AG04450 (cell line): ENCODE measurements at regions of chr22 and their contacts with region 1.

Region 1: DNA sequence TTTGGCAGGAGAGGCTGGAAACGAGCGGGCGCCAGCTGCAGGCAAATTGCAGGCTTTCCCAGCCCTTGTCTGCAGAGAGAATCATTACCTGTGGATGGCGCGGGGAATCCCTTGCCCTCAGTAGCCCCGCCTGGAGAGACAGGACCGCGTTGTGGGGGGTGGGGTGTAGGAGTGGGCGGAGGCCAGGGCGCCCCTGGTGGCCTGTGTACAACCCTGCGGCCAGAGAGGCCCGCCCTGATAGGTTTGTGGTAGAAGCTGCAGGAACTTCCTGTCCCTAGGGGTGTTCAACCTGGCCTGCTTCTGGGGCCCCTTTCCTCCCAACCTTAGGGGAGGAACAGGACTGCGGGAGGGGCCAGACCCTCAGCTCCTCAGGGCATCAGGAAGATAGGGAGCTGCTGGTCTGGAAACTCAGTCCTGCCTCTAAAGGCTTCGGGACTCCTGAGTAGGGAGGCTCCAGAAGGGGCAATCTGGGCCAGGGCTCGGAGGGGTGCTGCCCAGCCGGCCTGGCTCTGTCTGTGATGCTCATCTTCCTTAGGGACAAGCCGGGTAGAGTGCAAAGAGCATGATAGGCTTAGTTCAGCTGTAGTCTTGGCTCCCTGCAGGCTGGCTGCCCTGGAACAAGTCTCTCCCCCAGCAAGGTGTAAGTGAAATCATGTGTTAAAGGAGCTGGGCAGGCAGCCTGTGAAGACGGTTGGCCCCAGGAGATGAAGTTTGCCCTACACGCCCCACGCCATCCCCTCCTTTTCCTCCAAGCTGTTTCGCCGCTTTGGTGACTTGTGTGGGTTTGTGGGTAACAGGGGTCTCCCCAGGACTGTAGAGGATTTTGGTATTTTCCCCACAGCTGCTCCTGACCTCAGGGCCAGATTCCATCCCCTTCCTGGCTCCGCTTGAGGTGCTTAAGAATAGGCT is 24.1 kb upstream of the SUSD2 start:
- DNase-seq: no peak
- H3K4me3 ChIP-seq: peak overlapping the region; percentile 95
- H3K27ac ChIP-seq: peak overlapping the region; percentile 47
- H3K27me3 ChIP-seq: no peaks in the 10 kb centered on the region
- CTCF ChIP-seq: peak; percentile 93

Region 2: DNA sequence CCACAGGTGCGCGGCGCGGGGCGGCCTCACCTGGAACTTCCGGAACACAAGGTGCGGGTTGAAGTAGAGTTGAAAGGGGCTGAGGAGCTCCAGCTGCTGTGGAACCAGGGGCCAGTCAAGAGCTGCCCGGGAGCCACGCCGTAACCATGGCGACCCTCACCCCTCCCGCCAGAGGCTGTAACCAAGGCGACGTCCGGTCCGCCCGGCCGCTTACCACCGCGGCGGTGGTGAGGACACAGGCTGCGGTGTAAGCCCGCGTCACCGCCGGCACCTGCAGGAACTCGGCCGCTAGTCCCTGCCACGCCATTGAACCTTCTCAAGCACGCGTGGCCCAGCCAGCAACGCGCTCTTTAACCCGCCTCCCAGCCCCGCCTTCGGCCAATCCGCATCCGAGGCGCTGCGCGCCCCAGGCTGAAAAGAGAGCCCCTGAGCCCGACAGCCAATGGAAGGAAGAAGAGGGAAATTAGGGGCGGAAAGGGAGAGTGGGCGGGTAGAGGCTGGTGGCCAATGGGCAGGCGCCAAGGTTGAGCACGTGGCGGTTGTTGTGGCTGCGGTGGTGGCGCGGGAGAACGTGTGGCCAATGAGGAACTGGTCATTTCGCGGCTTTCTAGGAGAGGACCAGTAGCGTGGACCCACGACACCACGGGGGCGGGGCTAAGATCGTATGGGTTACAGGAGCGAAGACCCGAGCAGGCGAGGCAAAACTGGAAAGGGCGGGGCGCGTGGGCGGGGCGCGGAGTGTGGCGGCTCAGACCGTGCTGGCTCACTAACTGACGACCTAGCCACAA is 318.3 kb before region 1 on chr22 and contains the start of gene DERL3:
- CTCF ChIA-PET with region 1: no interaction called
- POLR2A ChIA-PET with region 1: no interaction called
- DNase-seq: peak; percentile 88
- H3K4me3 ChIP-seq: peak within 1 kb of the TSS; percentile 52
- H3K27ac ChIP-seq: no peak within 1 kb of the TSS
- H3K27me3 ChIP-seq: peaks cover 18% of the 10 kb centered on the region
- CTCF ChIP-seq: no peak
- polyA plus RNA-seq, gene DERL3: 0.19 and 0.27 TPM in 2 replicates

Region 3: DNA sequence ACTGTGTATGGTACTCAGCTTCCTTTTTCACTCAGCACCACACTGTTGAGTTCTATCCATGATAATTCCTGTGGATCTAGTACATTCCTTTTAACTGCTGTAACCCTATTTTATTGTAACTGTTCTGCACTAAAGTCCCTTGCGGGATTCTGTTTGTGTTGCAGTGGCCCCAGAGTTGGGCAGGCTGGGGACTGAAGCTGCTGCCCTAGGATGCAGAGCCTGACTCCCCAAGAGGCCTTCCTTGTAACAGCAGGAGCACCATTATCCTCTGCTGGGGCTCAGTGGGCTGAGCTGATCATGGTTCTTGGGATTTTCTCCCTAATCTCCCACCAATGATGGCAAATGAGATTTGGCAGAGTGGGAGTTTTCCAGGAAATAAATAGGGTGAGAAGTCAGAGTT is 68.4 kb before region 1 on chr22:
- CTCF ChIA-PET with region 1: interaction called, 15 read pairs
- POLR2A ChIA-PET with region 1: interaction called, 3 read pairs
- DNase-seq: no peak
- H3K4me3 ChIP-seq: no peak overlapping the region
- H3K27ac ChIP-seq: no peak overlapping the region
- H3K27me3 ChIP-seq: no peaks in the 10 kb centered on the region
- CTCF ChIP-seq: 0 out of 2 replicates have a peak, but pooled peaks have one; percentile 5

Region 4: GRCh38 chr22:24134090-24134846 is 22.9 kb before region 1 on chr22:
- CTCF ChIA-PET with region 1: interaction called, 12 read pairs
- POLR2A ChIA-PET with region 1: no interaction called
- DNase-seq: no peak
- H3K4me3 ChIP-seq: no peak overlapping the region
- H3K27ac ChIP-seq: no peak overlapping the region
- H3K27me3 ChIP-seq: no peaks in the 10 kb centered on the region
- CTCF ChIP-seq: no peak

Region 5: DNA sequence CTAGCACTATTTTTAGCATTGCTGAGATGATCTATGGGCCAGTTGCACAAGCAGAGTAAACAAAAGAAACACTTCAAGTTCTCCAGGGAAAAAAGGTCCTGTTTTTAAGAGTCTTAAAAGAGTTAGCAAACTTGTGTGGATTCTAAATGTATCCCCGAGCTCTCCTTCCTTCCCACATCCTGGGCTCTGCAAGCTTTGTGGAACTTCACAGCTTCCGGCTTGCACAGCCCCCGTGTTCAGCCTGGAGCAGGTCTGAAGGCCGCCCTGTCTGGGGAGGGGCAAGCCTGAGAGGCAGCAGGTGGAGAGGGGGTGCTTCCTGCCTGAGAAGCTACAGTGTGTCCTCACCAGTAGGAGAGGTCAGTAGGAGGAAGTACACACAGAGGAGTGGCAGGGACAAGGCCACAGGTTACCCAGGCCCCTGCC is 11.0 kb before region 1 on chr22:
- CTCF ChIA-PET with region 1: interaction called, 26 read pairs
- POLR2A ChIA-PET with region 1: interaction called, 27 read pairs
- DNase-seq: peak; percentile 55
- H3K4me3 ChIP-seq: peak overlapping the region; percentile 36
- H3K27ac ChIP-seq: peak overlapping the region; percentile 99
- H3K27me3 ChIP-seq: no peaks in the 10 kb centered on the region
- CTCF ChIP-seq: no peak

Region 6: DNA sequence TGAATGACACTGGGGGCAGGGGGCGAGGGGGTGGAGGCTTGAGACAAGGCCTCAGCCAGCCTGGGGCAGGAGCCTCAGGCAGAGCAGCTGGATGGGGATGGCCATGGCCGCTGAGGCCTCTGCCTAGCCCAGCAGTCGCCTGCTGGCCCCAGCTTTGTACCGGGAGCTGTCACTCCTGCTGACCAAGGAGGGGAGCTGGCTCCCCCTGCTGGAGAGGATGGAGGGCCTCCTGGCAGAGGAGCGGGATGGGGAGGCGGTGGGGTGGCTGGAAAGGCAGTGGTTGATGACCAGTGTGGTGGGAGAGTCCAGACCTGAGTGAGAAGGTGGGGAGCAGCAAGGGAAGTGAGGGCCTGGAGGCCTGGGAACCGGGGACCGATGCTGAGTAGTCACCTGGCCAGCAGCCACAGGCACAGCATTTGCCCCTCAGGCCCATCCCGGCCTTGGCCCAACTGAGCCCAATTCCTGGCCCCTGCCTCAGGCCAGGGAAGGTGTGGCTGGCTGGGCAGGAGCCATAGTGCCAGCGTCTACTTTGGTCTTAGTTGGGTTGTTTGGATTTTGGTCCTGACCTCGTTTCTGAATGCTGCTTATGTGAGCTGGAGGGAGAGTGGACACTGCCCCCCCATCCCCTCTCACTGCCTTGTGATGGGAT is 18.1 kb after region 1 on chr22:
- CTCF ChIA-PET with region 1: interaction called, 22 read pairs
- POLR2A ChIA-PET with region 1: no interaction called
- DNase-seq: peak; percentile 45
- H3K4me3 ChIP-seq: no peak overlapping the region
- H3K27ac ChIP-seq: no peak overlapping the region
- H3K27me3 ChIP-seq: no peaks in the 10 kb centered on the region
- CTCF ChIP-seq: peak; percentile 88

Region 7: DNA sequence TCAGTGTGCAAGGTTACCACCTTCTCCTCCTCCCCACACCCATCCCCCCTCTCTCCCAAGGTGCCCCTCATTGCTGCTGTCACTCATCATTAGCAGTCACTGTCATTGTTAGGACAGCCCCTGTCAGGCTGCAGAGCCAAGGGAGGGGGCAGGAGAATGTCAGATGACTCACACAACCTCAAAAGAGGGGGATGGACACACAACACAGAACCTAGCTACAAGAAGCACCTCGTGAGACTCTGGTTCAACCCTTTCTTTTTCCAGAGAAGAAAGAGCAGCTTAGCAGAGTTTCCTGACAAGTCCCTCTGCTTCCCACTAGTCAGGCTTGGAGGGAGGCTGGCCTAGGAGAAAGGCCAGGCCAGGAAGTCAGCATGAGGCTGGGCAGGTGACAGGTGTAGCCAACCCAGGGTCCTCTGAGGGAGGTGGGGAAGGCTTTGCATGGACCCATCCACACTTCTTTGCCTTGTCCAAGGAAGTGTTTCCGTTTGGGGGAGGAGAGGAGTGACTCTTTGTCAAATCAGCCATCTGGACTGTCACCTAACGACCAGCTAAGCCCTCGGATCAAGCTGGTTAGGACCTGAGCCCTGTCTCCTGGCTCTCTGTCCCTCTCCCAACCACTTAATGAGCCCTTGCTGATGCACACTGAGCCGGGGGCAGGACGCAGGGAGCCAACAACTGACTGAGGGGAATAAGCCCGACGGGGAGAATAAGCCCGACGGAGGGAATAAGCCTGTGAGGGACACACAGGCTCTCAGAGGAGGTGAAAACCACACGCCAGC is 288.5 kb after region 1 on chr22:
- CTCF ChIA-PET with region 1: no interaction called
- POLR2A ChIA-PET with region 1: no interaction called
- DNase-seq: no peak
- H3K4me3 ChIP-seq: no peak overlapping the region
- H3K27ac ChIP-seq: no peak overlapping the region
- H3K27me3 ChIP-seq: no peaks in the 10 kb centered on the region
- CTCF ChIP-seq: no peak